ENCODE measurements at regions of chr2 and their contacts with region 1.

Region 1: DNA sequence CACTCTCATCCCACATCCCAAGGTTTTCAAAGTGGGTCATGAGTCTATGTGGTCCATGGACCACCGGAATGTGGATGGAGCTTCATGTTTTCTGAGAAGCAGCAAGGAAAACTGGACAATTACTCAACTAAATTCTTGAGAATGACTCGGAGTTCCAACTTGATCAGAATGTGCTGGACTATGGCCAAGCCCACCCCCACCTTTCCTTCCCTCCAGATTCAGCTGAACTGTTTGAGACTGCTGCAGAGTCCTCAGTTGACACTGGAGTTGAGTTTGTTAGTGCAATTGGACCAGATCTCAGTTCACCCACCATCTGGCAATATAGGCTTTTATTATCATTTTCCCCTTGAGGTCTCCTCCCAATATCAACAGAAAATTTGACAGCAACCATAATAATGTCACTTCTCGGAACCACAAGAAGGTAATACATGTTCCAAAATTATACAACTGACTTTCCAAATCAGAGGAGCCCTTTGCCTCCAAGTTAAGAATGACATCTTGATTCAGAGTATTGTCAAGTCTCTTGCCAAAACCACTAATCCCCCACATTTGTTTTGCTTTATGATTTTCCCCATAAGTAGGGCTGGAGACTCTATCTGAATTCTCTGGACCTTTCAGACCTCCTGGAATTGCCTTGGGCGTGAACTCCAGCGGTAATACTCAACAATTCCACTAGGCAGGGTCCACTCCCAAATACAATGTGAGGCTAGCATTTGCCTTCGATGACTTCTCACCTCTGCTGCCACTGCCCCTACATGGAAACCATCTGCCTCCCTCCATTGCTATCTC is 8.8 kb downstream of the COL4A4 start:
- DNase-seq: no peak
- ATAC-seq: no peak
- H3K4me3 Mint-ChIP-seq: no peak overlapping the region
- H3K27ac Mint-ChIP-seq: no peak overlapping the region
- H3K4me1 Mint-ChIP-seq: peaks cover 11% of the 10 kb centered on the region
- H3K27me3 Mint-ChIP-seq: no peaks in the 10 kb centered on the region
- CTCF ChIP-seq: no peak

Region 2: GRCh38 chr2:227198866-227199265 is 43.7 kb after region 1 on chr2:
- CTCF ChIA-PET with region 1: no interaction called
- POLR2A ChIA-PET with region 1: no interaction called
- intact Hi-C with region 1: loop called (anchors 5 kb)
- DNase-seq: no peak
- ATAC-seq: no peak
- H3K4me3 Mint-ChIP-seq: no peak overlapping the region
- H3K27ac Mint-ChIP-seq: no peak overlapping the region
- H3K4me1 Mint-ChIP-seq: no peaks in the 10 kb centered on the region
- H3K27me3 Mint-ChIP-seq: no peaks in the 10 kb centered on the region
- CTCF ChIP-seq: no peak

Measured in activated B cell treated with CpG ODN at 0.5 μM for 24 hours (primary cell).